HEK293 (cell line): ENCODE measurements at regions of chr17 and their contacts with region 1.

Region 1: GRCh38 chr17:78133971-78134898 is 3.7 kb downstream of the TMC8 start:
- H3K4me3 ChIP-seq: no peak overlapping the region
- H3K27ac ChIP-seq: no peak overlapping the region
- H3K4me1 ChIP-seq: no peaks in the 10 kb centered on the region
- CTCF ChIP-seq: peak; percentile 65

Region 2: GRCh38 chr17:78019367-78019975 is 114.8 kb before region 1 on chr17:
- CTCF ChIA-PET with region 1: interaction called, 10 read pairs
- POLR2A ChIA-PET with region 1: no interaction called
- H3K4me3 ChIP-seq: no peak overlapping the region
- H3K27ac ChIP-seq: no peak overlapping the region
- H3K4me1 ChIP-seq: no peaks in the 10 kb centered on the region
- CTCF ChIP-seq: 0 out of 2 replicates have a peak, but pooled peaks have one; percentile 13

Region 3: GRCh38 chr17:78112518-78113226 is 21.6 kb before region 1 on chr17:
- CTCF ChIA-PET with region 1: interaction called, 10 read pairs
- POLR2A ChIA-PET with region 1: no interaction called
- H3K4me3 ChIP-seq: no peak overlapping the region
- H3K27ac ChIP-seq: no peak overlapping the region
- H3K4me1 ChIP-seq: no peaks in the 10 kb centered on the region
- CTCF ChIP-seq: peak; percentile 96

Region 4: GRCh38 chr17:78151514-78152008 is 17.3 kb after region 1 on chr17:
- CTCF ChIA-PET with region 1: interaction called, 11 read pairs
- POLR2A ChIA-PET with region 1: no interaction called
- H3K4me3 ChIP-seq: no peak overlapping the region
- H3K27ac ChIP-seq: no peak overlapping the region
- H3K4me1 ChIP-seq: no peaks in the 10 kb centered on the region
- CTCF ChIP-seq: no peak

Region 5: DNA sequence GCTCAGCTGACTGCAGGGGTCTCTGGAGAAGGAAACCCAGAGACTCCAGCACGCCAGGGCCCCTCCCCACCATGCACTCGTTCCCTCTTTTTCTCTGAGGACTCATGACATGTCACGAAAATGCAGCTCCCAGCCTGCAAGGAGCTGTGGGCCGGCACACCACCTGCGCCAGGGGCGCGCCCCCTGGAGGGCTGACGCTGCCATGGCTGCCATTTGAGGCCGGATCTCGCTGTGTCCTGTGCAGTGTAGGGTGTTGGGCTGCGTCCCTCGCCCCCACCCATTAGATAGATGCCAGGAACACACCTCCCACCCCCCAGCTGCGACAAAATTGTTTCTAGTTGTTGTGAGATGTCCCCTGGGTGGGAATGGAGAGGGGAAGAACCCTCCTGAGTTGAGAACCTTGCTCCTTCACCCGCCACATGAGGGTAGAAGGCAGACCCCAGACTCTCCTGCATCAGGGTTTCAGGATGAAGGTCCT is 42.4 kb after region 1 on chr17:
- CTCF ChIA-PET with region 1: interaction called, 12 read pairs
- POLR2A ChIA-PET with region 1: interaction called, 9 read pairs
- H3K4me3 ChIP-seq: no peak overlapping the region
- H3K27ac ChIP-seq: no peak overlapping the region
- H3K4me1 ChIP-seq: no peaks in the 10 kb centered on the region; the same call in 1 of the 2 replicates
- CTCF ChIP-seq: peak; percentile 90

Region 6: DNA sequence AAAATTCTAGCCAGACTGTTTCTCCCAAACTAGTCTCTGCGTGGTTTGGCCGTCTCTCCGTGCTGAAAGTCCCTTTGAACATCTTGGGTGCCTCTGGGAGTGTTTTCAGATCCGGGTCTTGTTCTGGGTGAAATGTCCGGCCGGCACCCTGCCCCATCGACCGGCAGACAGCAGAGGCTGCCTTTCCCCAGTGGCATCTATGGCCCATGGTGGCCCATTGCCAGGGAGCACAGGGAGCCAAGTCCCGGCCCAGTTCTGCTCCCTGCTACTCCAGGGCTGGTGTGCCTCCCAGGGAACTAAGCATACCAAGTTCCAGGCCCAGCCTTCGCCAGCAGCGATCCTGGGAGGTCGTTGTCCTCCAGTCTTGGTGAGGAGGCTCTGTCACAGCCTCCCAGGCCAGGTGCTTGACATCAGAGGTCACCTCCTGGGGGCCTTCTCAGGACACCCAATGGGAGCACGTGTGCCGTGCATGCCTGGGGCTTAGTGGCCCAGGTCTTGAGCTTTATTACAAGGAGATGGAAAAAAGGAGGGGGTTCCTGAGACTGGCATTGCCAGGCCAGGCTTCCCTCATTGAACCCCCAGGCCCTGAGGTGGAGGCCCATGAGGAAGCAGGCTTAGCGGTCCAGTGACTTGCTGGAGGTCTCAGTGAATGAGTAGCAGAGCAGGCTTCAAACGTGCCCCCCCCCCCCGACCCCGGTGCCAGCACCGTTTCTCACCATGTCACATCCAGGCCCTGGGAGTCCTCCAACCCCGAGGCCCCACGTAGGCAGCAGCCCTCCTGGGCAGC is 298.2 kb after region 1 on chr17:
- CTCF ChIA-PET with region 1: no interaction called
- POLR2A ChIA-PET with region 1: no interaction called
- H3K4me3 ChIP-seq: no peak overlapping the region
- H3K27ac ChIP-seq: no peak overlapping the region
- H3K4me1 ChIP-seq: no peaks in the 10 kb centered on the region
- CTCF ChIP-seq: no peak